Activated CD4-positive, alpha-beta memory T cell treated with anti-CD3 and anti-CD28 coated beads for 36 hours (primary cell): ENCODE measurements at regions of chrX and their contacts with region 1.

Region 1: GRCh38 chrX:46588263-46588662 is 14.7 kb downstream of the CHST7 start:
- DNase-seq: peak; percentile 61
- H3K4me3 Mint-ChIP-seq: peak overlapping the region; percentile 65
- H3K27ac Mint-ChIP-seq: peak overlapping the region; percentile 88
- H3K4me1 Mint-ChIP-seq: peaks cover 55% of the 10 kb centered on the region
- H3K27me3 Mint-ChIP-seq: no peaks in the 10 kb centered on the region

Region 2: GRCh38 chrX:46268429-46268828 is 319.8 kb before region 1 on chrX:
- CTCF ChIA-PET with region 1: no interaction called
- POLR2A ChIA-PET with region 1: no interaction called
- intact Hi-C with region 1: no loop called
- DNase-seq: peak; percentile 28
- H3K4me3 Mint-ChIP-seq: no peak overlapping the region
- H3K27ac Mint-ChIP-seq: no peak overlapping the region
- H3K4me1 Mint-ChIP-seq: peaks cover 8% of the 10 kb centered on the region
- H3K27me3 Mint-ChIP-seq: no peaks in the 10 kb centered on the region

Region 3: GRCh38 chrX:46354481-46354880 is 233.8 kb before region 1 on chrX:
- CTCF ChIA-PET with region 1: no interaction called
- POLR2A ChIA-PET with region 1: no interaction called
- intact Hi-C with region 1: no loop called
- DNase-seq: no peak
- H3K4me3 Mint-ChIP-seq: no peak overlapping the region
- H3K27ac Mint-ChIP-seq: no peak overlapping the region
- H3K4me1 Mint-ChIP-seq: no peaks in the 10 kb centered on the region
- H3K27me3 Mint-ChIP-seq: no peaks in the 10 kb centered on the region

Region 4: GRCh38 chrX:46628460-46629371 is 40.5 kb after region 1 on chrX:
- CTCF ChIA-PET with region 1: no interaction called
- POLR2A ChIA-PET with region 1: interaction called, 4 read pairs
- intact Hi-C with region 1: loop called (anchors 5 kb)
- DNase-seq: peak; percentile 46
- H3K4me3 Mint-ChIP-seq: no peak overlapping the region
- H3K27ac Mint-ChIP-seq: peak overlapping the region; percentile 64
- H3K4me1 Mint-ChIP-seq: peaks cover 42% of the 10 kb centered on the region
- H3K27me3 Mint-ChIP-seq: no peaks in the 10 kb centered on the region

Region 5: GRCh38 chrX:46713672-46714490 is 125.6 kb after region 1 on chrX:
- CTCF ChIA-PET with region 1: no interaction called
- POLR2A ChIA-PET with region 1: no interaction called
- intact Hi-C with region 1: loop called (anchors 5 kb)
- DNase-seq: no peak
- H3K4me3 Mint-ChIP-seq: no peak overlapping the region
- H3K27ac Mint-ChIP-seq: peak overlapping the region; percentile 33
- H3K4me1 Mint-ChIP-seq: peaks cover 65% of the 10 kb centered on the region
- H3K27me3 Mint-ChIP-seq: no peaks in the 10 kb centered on the region